PC-9 (cell line): ENCODE measurements at regions of chr9 and their contacts with region 1.

Region 1: DNA sequence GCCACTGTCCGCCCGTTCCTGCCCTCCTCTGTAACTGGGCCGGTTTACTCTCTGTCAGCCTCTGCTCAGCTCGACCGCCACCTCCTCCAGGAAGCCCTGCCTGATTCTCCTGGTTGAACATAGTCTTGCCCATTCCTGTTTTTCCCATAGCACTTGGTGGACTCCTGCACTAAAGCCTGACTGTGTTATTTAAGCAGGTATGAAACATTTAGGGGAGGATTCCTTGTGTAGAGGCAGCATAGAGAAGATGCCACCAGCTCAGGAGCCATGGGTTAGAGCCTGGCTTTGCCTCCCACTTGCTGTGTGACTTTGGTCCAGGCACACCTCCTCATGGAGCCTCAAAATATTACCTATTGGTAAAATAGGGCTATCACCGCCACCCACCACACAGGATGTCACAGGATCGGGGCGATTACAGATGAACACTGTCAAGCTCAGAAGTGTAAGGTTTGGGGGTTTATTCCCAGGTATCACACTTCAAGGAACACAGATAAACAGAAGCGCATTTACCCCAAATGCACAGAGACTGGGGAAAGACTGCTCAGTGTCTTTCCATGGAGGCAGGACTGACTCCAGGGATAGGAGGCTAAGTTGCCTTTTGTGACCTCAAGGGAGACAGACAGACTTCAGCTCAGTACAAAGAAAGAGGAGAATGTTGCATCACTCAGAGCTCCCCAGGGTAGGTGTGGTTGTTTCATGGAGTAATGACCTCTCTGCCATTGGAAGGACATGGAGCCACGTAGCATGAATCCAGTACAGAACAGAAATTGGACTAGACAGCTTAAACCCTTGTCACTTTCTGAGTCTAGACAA is 6.8 kb downstream of the TRAF1 start:
- DNase-seq: no peak
- H3K4me3 ChIP-seq: no peak overlapping the region
- H3K27ac ChIP-seq: no peak overlapping the region
- H3K4me1 ChIP-seq: no peaks in the 10 kb centered on the region
- H3K27me3 ChIP-seq: no peaks in the 10 kb centered on the region
- CTCF ChIP-seq: no peak

Region 2: GRCh38 chr9:120882935-120883607 is 36.8 kb before region 1 on chr9:
- CTCF ChIA-PET with region 1: interaction called, 3 read pairs
- POLR2A ChIA-PET with region 1: interaction called, 24 read pairs
- intact Hi-C with region 1: no loop called
- DNase-seq: peak; percentile 73 to 77
- H3K4me3 ChIP-seq: no peak overlapping the region
- H3K27ac ChIP-seq: no peak overlapping the region
- H3K4me1 ChIP-seq: peaks cover 42% of the 10 kb centered on the region
- H3K27me3 ChIP-seq: no peaks in the 10 kb centered on the region
- CTCF ChIP-seq: no peak

Region 3: GRCh38 chr9:120890320-120891244 is 29.3 kb before region 1 on chr9:
- CTCF ChIA-PET with region 1: interaction called, 10 read pairs
- POLR2A ChIA-PET with region 1: no interaction called
- intact Hi-C with region 1: no loop called
- DNase-seq: no peak
- H3K4me3 ChIP-seq: no peak overlapping the region
- H3K27ac ChIP-seq: no peak overlapping the region
- H3K4me1 ChIP-seq: peaks cover 21% of the 10 kb centered on the region
- H3K27me3 ChIP-seq: no peaks in the 10 kb centered on the region
- CTCF ChIP-seq: no peak

Region 4: GRCh38 chr9:120985810-120986222 is 66.0 kb after region 1 on chr9:
- CTCF ChIA-PET with region 1: no interaction called
- POLR2A ChIA-PET with region 1: no interaction called
- intact Hi-C with region 1: no loop called
- DNase-seq: peak; percentile 17 to 57
- H3K4me3 ChIP-seq: no peak overlapping the region
- H3K27ac ChIP-seq: no peak overlapping the region
- H3K4me1 ChIP-seq: no peaks in the 10 kb centered on the region
- H3K27me3 ChIP-seq: no peaks in the 10 kb centered on the region
- CTCF ChIP-seq: peak; percentile 70